Common myeloid progenitor, CD34-positive (primary cell): ENCODE measurements at regions of chr7 and their contacts with region 1.

Region 1: DNA sequence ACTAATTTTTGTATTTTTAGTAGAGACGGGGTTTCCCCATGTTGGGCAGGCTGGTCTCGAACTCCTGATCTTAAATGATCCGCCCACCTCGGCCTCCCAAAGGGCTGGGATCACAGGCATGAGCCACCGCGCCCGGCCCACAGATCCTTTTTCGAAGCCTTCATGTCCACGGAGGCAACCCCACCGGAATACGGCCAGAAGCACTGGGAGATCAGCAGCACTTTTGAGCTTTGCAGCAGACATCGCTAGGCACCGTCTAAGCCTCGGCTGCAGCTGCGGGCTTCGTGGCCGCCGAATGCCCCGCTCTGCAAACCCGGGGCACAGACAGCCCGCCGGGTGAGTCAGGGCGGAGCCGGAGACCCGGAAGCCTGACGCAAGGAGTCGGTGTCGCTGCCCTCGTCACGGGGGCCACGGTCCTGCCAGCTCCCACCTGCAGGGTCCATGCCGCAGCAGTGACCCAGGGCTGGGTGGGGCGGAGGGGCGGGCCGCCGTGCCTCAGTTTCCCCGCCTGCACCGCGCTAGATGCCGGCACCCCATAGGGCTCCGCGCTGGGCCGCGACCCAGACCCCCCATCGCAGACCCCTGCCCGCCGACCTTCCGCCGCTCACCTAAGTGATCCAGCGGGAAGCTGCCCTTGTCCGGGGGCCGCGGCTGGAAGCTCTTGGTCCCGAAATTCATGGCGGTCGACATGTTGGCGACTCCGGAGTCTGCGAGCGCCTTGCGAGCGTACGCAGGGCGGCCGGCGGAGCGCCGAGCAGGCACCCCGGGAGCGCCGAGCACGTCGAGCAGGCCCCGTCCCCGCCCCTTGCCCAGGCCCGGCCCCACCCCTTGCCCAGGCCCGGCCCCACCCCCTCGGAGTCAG is at the start of gene COX19:
- DNase-seq: peak; percentile 91 to 96 (median 95)
- H3K4me3 ChIP-seq: peak within 1 kb of the TSS; percentile 69 to 97 (median 89)
- H3K27ac ChIP-seq: peak within 1 kb of the TSS; percentile 93 to 95
- H3K4me1 ChIP-seq: peaks cover 3 to 23% (median 13%) of the 10 kb centered on the region in 4 experiments
- H3K27me3 ChIP-seq: no peaks in the 10 kb centered on the region

Region 2: GRCh38 chr7:1065263-1066260 is 90.5 kb after region 1 on chr7:
- CTCF ChIA-PET with region 1: interaction called, 15 read pairs
- POLR2A ChIA-PET with region 1: interaction called, 6 read pairs
- DNase-seq: peak; percentile 66 to 85 (median 83)
- H3K4me3 ChIP-seq: peak overlapping the region in 5 of 7 experiments; percentile 37 to 77 (median 44)
- H3K27ac ChIP-seq: no peak overlapping the region
- H3K4me1 ChIP-seq: peaks cover 0 to 38% (median 36%) of the 10 kb centered on the region in 4 experiments
- H3K27me3 ChIP-seq: no peaks in the 10 kb centered on the region